ENCODE measurements at regions of chr12 and their contacts with region 1.

Region 1: GRCh38 chr12:122471324-122472226 is 29.2 kb downstream of the ZCCHC8 start:
- DNase-seq: no peak
- H3K4me3 Mint-ChIP-seq: no peak overlapping the region
- H3K27ac Mint-ChIP-seq: no peak overlapping the region
- H3K4me1 Mint-ChIP-seq: peaks cover 27% of the 10 kb centered on the region
- H3K27me3 Mint-ChIP-seq: no peaks in the 10 kb centered on the region

Region 2: GRCh38 chr12:120849765-120850164 is 1621.8 kb before region 1 on chr12:
- intact Hi-C with region 1: loop called (anchors 10 kb)
- DNase-seq: no peak
- H3K4me3 Mint-ChIP-seq: no peak overlapping the region
- H3K27ac Mint-ChIP-seq: no peak overlapping the region
- H3K4me1 Mint-ChIP-seq: peaks cover 47% of the 10 kb centered on the region
- H3K27me3 Mint-ChIP-seq: no peaks in the 10 kb centered on the region

Region 3: DNA sequence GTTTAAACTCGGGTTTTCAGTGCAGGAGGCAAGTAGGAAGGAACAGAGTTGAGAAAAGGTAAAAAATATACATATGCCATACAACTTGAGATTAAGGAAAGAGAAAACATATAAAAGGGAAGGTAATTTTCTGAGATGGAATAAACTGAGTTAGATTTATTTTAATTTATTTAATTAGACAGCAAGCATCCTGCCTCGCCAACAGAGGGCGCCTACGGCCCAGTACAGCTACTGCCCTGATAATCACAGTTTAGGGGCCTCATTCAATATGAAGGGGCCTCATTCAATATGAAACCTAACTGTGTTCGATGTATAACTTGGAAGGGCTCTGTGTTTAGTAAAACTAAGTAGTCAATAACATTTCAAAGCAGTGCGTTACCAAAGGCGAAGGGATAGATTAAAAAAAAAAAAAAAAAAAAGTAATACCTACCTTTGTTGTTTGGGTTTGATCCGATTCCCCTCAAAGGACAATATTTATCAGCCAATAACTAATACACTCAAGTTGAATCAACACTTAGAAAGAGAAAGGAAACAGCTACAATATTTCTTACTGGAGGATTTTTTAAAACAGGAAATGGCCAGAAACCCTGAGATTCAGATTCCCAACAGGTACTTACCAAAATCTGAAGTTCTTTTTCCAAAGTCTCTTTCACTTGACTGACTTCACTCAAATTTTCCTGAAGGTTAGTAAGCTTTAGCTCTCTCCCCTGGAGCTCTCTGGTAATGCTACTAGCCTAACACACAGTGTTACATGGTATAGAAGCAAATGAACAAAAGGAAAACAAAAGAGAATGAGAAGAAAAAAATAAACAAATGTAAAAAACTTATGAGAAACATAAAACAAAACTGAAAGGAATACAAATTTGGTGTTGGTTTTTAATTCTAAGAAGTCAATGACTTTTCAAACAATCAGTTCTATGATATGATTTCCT is 135.3 kb before region 1 on chr12:
- intact Hi-C with region 1: loop called (anchors 1 kb)
- DNase-seq: no peak
- H3K4me3 Mint-ChIP-seq: no peak overlapping the region
- H3K27ac Mint-ChIP-seq: peak overlapping the region; percentile 53
- H3K4me1 Mint-ChIP-seq: peaks cover 18% of the 10 kb centered on the region
- H3K27me3 Mint-ChIP-seq: no peaks in the 10 kb centered on the region

Region 4: GRCh38 chr12:122421821-122422729 is 49.5 kb before region 1 on chr12 and contains the start of gene CLIP1:
- intact Hi-C with region 1: loop called (anchors 2 kb)
- DNase-seq: peak; percentile 57
- H3K4me3 Mint-ChIP-seq: peak within 1 kb of the TSS; percentile 94
- H3K27ac Mint-ChIP-seq: peak within 1 kb of the TSS; percentile 89
- H3K4me1 Mint-ChIP-seq: peaks cover 33% of the 10 kb centered on the region
- H3K27me3 Mint-ChIP-seq: peaks cover 2% of the 10 kb centered on the region
- total RNA-seq, gene CLIP1: 64.1 and 71.9 TPM in 2 replicates

Region 5: GRCh38 chr12:122452701-122453285 is 18.8 kb before region 1 on chr12:
- intact Hi-C with region 1: loop called (anchors 1 kb)
- DNase-seq: no peak
- H3K4me3 Mint-ChIP-seq: peak overlapping the region; percentile 78
- H3K27ac Mint-ChIP-seq: peak overlapping the region; percentile 98
- H3K4me1 Mint-ChIP-seq: peaks cover 38% of the 10 kb centered on the region
- H3K27me3 Mint-ChIP-seq: no peaks in the 10 kb centered on the region

Region 6: GRCh38 chr12:122501489-122501989 is 30.0 kb after region 1 on chr12:
- intact Hi-C with region 1: no loop called
- DNase-seq: no peak
- H3K4me3 Mint-ChIP-seq: peak overlapping the region; percentile 92
- H3K27ac Mint-ChIP-seq: peak overlapping the region; percentile 84
- H3K4me1 Mint-ChIP-seq: peaks cover 34% of the 10 kb centered on the region
- H3K27me3 Mint-ChIP-seq: no peaks in the 10 kb centered on the region

Region 7: DNA sequence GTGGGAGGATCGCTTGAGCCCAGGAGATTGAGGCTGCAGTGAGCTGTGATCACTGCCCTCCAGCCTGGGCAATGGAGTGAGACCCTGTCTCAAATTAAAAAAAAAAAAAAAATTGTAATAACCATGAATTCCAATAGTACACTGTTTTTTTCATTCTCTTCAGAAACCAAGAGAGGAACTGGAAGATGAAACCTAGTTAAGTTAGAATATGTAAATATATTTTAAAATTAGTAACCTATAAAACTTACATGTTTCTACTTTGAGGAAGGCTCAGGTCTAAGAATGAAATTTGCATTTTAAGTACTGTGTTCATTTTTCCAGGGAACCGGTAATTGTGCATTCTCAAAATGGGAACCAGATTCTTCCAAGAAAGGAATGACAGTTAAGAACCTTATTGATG is 74.3 kb after region 1 on chr12:
- intact Hi-C with region 1: no loop called
- DNase-seq: no peak
- H3K4me3 Mint-ChIP-seq: no peak overlapping the region
- H3K27ac Mint-ChIP-seq: no peak overlapping the region
- H3K4me1 Mint-ChIP-seq: no peaks in the 10 kb centered on the region
- H3K27me3 Mint-ChIP-seq: no peaks in the 10 kb centered on the region

Region 8: GRCh38 chr12:122659519-122659918 is 187.9 kb after region 1 on chr12:
- intact Hi-C with region 1: no loop called
- DNase-seq: no peak
- H3K4me3 Mint-ChIP-seq: no peak overlapping the region
- H3K27ac Mint-ChIP-seq: no peak overlapping the region
- H3K4me1 Mint-ChIP-seq: no peaks in the 10 kb centered on the region
- H3K27me3 Mint-ChIP-seq: no peaks in the 10 kb centered on the region

Measured in activated T-helper 1 cell treated with anti-CD3 and anti-CD28 coated beads, Interleukin-12 subunit alpha, Interleukin-12 subunit beta, Interleukin-2, Interleukin-4 antibody, amounts not matched to agents 30 ng/mL and 10 ng/mL and 1 ng/mL, durations not matched to agents 14 hours and 24 hours and 36 hours (primary cell).